Caco-2 (cell line): ENCODE measurements at regions of chr18 and their contacts with region 1.

Region 1: DNA sequence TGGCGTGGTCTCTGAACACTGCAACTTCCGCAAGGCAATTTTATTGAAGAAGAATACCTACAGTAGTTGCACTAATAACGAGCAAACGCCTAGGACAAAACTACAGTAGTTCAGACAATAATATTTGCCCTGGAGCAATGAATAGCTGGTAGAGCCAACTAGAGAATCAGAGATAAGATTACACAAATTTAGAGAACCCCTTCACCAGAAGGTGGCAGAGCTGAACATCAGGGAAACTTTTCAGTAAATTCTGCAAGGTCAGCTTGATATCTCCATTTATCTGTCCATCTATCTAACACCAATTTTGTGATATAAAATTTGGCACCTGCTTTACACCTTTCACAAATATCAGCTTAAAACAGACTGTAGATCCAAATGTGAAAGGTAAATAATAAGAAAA is 43.8 kb downstream of the CDH19 start:
- DNase-seq: peak in 1 of 2 experiments; percentile 5
- H3K4me3 ChIP-seq: no peak overlapping the region
- H3K4me3 Mint-ChIP-seq: no peak overlapping the region
- H3K27ac Mint-ChIP-seq: no peak overlapping the region
- H3K4me1 ChIP-seq: no peaks in the 10 kb centered on the region
- H3K4me1 Mint-ChIP-seq: no peaks in the 10 kb centered on the region
- H3K27me3 ChIP-seq: no peaks in the 10 kb centered on the region
- H3K27me3 Mint-ChIP-seq: no peaks in the 10 kb centered on the region
- CTCF ChIP-seq: no peak

Region 2: DNA sequence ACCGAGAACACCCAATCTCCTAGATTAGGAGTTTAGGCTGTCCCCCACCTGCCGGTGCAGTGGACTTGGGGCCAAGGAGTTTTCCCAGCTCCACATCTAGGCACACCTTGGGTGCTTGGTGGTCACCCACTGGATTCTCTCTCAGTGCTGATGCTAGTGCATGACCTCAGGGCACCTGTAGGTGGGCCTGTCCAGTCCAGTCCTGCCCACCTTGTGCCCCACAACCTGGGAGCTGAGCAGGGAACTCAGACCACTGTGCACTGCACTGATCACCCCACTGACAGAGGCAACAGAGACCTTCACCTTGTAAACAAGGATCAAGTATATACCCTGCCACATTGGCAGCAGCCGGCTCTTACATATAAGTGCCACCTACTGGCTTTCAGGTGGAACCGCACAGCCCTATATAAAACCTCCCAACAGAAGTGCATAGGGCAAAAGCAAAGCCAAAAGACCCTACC is 56.5 kb after region 1 on chr18:
- CTCF ChIA-PET with region 1: no interaction called
- POLR2A ChIA-PET with region 1: no interaction called
- intact Hi-C with region 1: loop called (anchors 1 kb)
- DNase-seq: no peak
- H3K4me3 ChIP-seq: no peak overlapping the region
- H3K4me3 Mint-ChIP-seq: no peak overlapping the region
- H3K27ac Mint-ChIP-seq: no peak overlapping the region
- H3K4me1 ChIP-seq: no peaks in the 10 kb centered on the region
- H3K4me1 Mint-ChIP-seq: no peaks in the 10 kb centered on the region
- H3K27me3 ChIP-seq: no peaks in the 10 kb centered on the region
- H3K27me3 Mint-ChIP-seq: no peaks in the 10 kb centered on the region
- CTCF ChIP-seq: peak; percentile 11 to 18

Region 3: GRCh38 chr18:66694852-66695251 is 134.8 kb after region 1 on chr18:
- CTCF ChIA-PET with region 1: no interaction called
- POLR2A ChIA-PET with region 1: no interaction called
- intact Hi-C with region 1: no loop called
- DNase-seq: no peak
- H3K4me3 ChIP-seq: no peak overlapping the region
- H3K4me3 Mint-ChIP-seq: no peak overlapping the region
- H3K27ac Mint-ChIP-seq: no peak overlapping the region
- H3K4me1 ChIP-seq: no peaks in the 10 kb centered on the region
- H3K4me1 Mint-ChIP-seq: no peaks in the 10 kb centered on the region
- H3K27me3 ChIP-seq: no peaks in the 10 kb centered on the region
- H3K27me3 Mint-ChIP-seq: peaks cover 3% of the 10 kb centered on the region
- CTCF ChIP-seq: no peak

Region 4: GRCh38 chr18:66749030-66749429 is 188.9 kb after region 1 on chr18:
- CTCF ChIA-PET with region 1: no interaction called
- POLR2A ChIA-PET with region 1: no interaction called
- intact Hi-C with region 1: loop called (anchors 1 kb)
- DNase-seq: no peak
- H3K4me3 ChIP-seq: no peak overlapping the region
- H3K4me3 Mint-ChIP-seq: no peak overlapping the region
- H3K27ac Mint-ChIP-seq: no peak overlapping the region
- H3K4me1 ChIP-seq: no peaks in the 10 kb centered on the region
- H3K4me1 Mint-ChIP-seq: no peaks in the 10 kb centered on the region
- H3K27me3 ChIP-seq: no peaks in the 10 kb centered on the region
- H3K27me3 Mint-ChIP-seq: no peaks in the 10 kb centered on the region
- CTCF ChIP-seq: no peak